ENCODE measurements at regions of chr1 and their contacts with region 1.

Region 1: GRCh38 chr1:52365746-52366516 is at the start of gene CC2D1B:
- DNase-seq: peak; percentile 99
- H3K4me3 ChIP-seq: peak within 1 kb of the TSS; percentile 78 to 94 (median 93)
- H3K27ac ChIP-seq: peak within 1 kb of the TSS; percentile 86
- H3K4me1 ChIP-seq: peaks cover 11% of the 10 kb centered on the region
- H3K27me3 ChIP-seq: no peaks in the 10 kb centered on the region
- CTCF ChIP-seq: peak; percentile 5 to 27
- POLR2A ChIP-seq: peak; percentile 94
- total RNA-seq, gene CC2D1B: 32.6 and 39.9 TPM in 2 replicates

Region 2: DNA sequence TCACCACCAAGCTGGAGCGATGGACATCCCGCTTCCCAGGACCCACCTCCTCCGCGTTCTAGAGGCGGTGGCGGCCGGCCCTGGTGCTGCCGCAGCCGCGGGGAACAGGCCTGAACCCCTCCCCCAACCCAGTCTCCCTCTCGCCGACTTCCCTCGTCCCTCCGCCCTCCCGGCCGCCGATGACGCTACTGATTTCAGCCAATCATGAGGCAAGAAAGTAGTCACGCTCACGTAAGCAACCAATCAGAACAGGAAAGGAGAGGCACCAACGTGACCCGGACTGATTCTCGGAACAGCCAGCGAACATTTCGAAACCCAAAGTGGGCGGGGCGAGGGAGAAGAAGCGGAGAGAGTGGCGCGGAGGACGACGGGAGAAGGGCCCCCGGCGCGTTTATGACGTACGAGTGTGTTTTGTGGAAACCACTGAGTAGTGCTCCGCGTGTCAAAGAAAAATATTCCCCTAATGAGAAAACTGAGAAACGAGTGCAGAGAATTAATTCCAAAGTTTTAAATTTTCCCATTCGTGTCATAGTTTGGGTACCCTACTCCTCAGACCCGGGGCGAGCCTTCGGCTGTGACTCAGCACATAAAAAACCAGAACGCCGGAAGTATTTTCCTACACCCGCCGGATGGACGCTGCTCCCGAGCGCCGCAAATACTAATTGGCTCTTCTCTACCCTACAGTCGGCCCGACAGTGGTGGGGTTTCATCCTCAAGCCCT is 487.2 kb before region 1 on chr1 and contains the start of gene NRDC:
- CTCF ChIA-PET with region 1: no interaction called
- POLR2A ChIA-PET with region 1: no interaction called
- dilution Hi-C with region 1: no loop called
- intact Hi-C with region 1: loop called (anchors 5 kb)
- DNase-seq: peak; percentile 100
- H3K4me3 ChIP-seq: peak within 1 kb of the TSS; percentile 89 to 94 (median 94)
- H3K27ac ChIP-seq: peak within 1 kb of the TSS; percentile 97
- H3K4me1 ChIP-seq: peaks cover 24% of the 10 kb centered on the region
- H3K27me3 ChIP-seq: no peaks in the 10 kb centered on the region
- CTCF ChIP-seq: no peak
- POLR2A ChIP-seq: peak; percentile 74
- total RNA-seq, gene NRDC: 125 and 146 TPM in 2 replicates

Region 3: DNA sequence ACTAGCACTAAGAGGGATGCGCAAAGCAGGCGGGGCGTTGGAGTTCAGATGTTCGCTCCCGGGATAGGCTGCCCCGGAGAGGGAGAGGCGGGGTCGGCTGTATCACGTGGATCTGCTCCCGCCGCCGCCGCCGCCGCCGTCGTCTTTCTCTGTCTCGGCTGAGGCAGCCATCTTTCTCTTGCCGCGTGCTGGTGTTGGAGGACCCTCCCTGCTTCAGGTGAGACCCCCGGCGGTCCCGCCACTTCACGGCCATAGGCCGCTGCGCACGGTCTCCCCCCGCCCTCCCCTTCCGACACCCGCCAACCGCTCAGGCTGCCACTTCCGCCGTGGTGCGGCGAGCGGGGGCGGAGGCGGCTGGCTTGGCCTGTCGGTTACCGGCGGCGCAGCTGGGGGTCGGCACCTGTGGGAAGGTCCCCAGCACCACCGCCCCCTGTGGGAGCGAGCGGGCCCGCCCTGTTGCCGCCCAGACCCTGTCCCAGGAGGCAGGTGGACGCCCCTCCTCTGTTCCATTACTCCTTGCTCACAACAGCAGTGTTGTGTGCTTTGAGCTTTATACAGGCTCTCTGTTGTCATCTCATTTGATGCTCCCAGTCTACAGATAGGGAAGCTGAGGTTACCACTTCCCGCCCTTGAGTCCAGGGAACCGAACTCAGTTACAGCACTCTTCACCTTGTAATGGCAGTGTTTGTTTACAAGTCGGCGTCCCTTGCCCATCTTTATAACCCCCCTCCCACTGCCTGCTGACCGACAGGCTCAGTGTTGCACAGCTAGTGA is 309.6 kb before region 1 on chr1 and contains the start of gene BTF3L4:
- CTCF ChIA-PET with region 1: no interaction called
- POLR2A ChIA-PET with region 1: no interaction called
- dilution Hi-C with region 1: no loop called
- intact Hi-C with region 1: loop called (anchors 5 kb)
- DNase-seq: peak; percentile 89
- H3K4me3 ChIP-seq: peak within 1 kb of the TSS; percentile 62 to 93 (median 92)
- H3K27ac ChIP-seq: peak within 1 kb of the TSS; percentile 75
- H3K4me1 ChIP-seq: peaks cover 24% of the 10 kb centered on the region
- H3K27me3 ChIP-seq: no peaks in the 10 kb centered on the region
- CTCF ChIP-seq: no peak
- POLR2A ChIP-seq: peak; percentile 52
- total RNA-seq, gene BTF3L4: 43.2 and 45.6 TPM in 2 replicates

Region 4: DNA sequence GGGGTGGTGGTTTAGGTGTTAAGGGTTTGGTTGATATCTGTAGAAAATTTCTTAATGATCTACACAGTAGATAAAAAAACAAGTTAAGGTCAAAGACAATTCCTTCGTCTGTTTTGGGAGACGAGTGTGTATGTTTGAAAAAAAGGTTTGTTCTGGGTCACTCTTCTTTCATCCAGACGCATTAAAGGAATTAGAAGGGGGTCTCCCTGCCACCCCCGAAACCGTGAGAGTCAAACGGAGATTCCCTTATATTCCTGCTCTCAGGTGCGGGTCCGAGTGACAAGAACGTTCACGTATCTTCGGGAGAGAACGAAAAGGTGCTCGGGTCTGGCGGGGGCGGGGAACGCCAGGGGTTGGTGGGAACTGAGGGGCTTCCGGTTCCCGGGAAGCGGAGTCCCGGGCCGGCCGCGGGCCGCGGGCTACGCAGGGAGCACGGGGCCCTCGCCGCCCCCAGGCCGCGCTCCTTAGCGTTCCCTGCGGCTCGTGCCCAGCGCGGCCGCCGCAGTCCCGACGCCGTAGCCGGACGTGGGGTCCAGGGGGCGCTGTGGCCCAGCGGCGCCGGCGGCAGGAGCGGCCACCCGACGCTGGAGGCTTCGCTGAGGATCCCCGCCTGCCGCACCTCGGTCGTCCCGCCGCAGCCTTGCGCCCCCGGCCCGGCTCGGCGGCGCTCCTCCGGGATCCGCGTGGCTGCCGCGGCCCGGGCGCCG is 224.3 kb before region 1 on chr1 and contains the start of gene ZFYVE9:
- CTCF ChIA-PET with region 1: interaction called, 5 read pairs
- POLR2A ChIA-PET with region 1: no interaction called
- dilution Hi-C with region 1: no loop called
- intact Hi-C with region 1: loop called (anchors 1 kb)
- DNase-seq: peak; percentile 79
- H3K4me3 ChIP-seq: peak within 1 kb of the TSS; percentile 29 to 83 (median 48)
- H3K27ac ChIP-seq: peak within 1 kb of the TSS; percentile 79
- H3K4me1 ChIP-seq: peaks cover 33% of the 10 kb centered on the region
- H3K27me3 ChIP-seq: no peaks in the 10 kb centered on the region
- CTCF ChIP-seq: peak; percentile 65 to 71
- POLR2A ChIP-seq: peak; percentile 45
- total RNA-seq, gene ZFYVE9: 14.8 and 16.8 TPM in 2 replicates

Region 5: DNA sequence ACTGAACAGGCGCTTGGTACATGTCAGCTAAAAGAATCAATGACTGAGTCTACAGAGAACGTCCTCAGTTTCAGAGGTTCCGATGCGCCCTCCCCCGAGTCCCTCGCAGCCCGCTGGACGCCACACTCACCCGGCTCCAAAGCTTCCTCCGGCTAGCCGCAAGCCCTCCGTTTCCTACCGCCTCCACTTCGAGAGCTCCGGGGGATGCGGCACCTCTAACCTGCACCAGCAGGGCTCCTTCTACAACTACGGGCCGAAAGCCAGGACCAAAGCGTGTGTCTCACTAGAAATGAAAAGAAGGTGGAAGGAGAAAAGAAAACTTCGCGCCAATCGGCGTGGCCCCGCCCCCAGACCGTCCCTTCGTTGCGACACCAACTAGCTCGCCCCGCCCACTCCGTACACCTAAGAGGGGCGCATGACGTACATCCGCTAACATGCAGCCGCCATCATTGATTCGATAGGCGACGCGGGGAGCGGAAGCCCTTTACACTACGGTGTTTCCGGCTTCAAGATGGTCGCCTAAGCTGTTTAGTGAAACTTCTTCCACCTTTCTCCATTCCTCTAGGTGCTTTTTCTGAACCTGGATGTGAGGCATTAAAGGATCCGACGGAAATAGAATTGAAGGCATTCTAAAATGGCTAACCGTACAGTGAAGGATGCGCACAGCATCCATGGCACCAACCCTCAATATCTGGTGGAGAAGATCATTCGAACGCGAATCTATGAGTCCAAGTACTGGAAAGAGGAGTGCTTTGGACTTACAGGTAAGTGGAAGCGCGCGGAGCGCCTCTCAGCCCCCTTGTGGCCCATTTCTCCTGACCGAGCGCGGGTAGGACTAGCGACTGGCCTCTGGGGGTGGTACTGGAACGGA is 38.4 kb after region 1 on chr1 and contains the starts of genes ORC1 and PRPF38A:
- CTCF ChIA-PET with region 1: interaction called, 8 read pairs
- POLR2A ChIA-PET with region 1: no interaction called
- dilution Hi-C with region 1: no loop called
- intact Hi-C with region 1: loop called (anchors 1 kb)
- DNase-seq: peak; percentile 97
- H3K4me3 ChIP-seq: peak within 1 kb of the TSS; percentile 57 to 98 (median 83)
- H3K27ac ChIP-seq: peak within 1 kb of the TSS; percentile 98
- H3K4me1 ChIP-seq: peaks cover 14% of the 10 kb centered on the region
- H3K27me3 ChIP-seq: no peaks in the 10 kb centered on the region
- CTCF ChIP-seq: peak; percentile 60 to 75
- POLR2A ChIP-seq: peak; percentile 82
- total RNA-seq, gene ORC1: 11.0 and 12.0 TPM in 2 replicates
- total RNA-seq, gene PRPF38A: 38.4 and 42.0 TPM in 2 replicates

Region 6: GRCh38 chr1:52665006-52665941 is 299.3 kb after region 1 on chr1:
- CTCF ChIA-PET with region 1: no interaction called
- POLR2A ChIA-PET with region 1: no interaction called
- dilution Hi-C with region 1: no loop called
- intact Hi-C with region 1: loop called (anchors 5 kb)
- DNase-seq: no peak
- H3K4me3 ChIP-seq: no peak overlapping the region
- H3K27ac ChIP-seq: no peak overlapping the region
- H3K4me1 ChIP-seq: no peaks in the 10 kb centered on the region
- H3K27me3 ChIP-seq: peaks cover 0 to 2% of the 10 kb centered on the region in 2 experiments
- CTCF ChIP-seq: no peak
- POLR2A ChIP-seq: no peak

Region 7: DNA sequence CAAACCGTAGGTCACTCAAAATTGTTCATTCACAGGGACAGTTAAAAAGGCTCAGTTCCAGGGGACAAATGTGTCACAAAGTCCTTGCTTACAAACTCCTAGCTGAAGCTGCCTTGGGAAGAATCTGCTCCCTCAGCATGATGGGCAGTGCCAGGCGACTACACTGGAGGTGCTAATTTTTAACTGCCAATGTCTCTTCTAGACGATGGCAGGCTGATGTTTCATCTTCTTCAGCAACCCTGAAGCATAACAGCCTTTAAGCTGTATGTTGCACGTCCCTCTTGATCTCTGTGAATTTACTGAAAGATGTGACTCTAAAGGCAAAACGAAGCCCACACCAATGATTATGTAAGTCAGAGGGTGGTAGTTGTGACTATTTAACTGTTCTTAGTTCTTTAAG is 320.9 kb after region 1 on chr1:
- CTCF ChIA-PET with region 1: interaction called, 6 read pairs
- POLR2A ChIA-PET with region 1: interaction called, 3 read pairs
- dilution Hi-C with region 1: no loop called
- intact Hi-C with region 1: loop called (anchors 1 kb)
- DNase-seq: no peak
- H3K4me3 ChIP-seq: no peak overlapping the region
- H3K27ac ChIP-seq: no peak overlapping the region
- H3K4me1 ChIP-seq: no peaks in the 10 kb centered on the region
- H3K27me3 ChIP-seq: no peaks in the 10 kb centered on the region
- CTCF ChIP-seq: no peak
- POLR2A ChIP-seq: no peak